ENCODE measurements at regions of chr1 and their contacts with region 1.

Region 1: DNA sequence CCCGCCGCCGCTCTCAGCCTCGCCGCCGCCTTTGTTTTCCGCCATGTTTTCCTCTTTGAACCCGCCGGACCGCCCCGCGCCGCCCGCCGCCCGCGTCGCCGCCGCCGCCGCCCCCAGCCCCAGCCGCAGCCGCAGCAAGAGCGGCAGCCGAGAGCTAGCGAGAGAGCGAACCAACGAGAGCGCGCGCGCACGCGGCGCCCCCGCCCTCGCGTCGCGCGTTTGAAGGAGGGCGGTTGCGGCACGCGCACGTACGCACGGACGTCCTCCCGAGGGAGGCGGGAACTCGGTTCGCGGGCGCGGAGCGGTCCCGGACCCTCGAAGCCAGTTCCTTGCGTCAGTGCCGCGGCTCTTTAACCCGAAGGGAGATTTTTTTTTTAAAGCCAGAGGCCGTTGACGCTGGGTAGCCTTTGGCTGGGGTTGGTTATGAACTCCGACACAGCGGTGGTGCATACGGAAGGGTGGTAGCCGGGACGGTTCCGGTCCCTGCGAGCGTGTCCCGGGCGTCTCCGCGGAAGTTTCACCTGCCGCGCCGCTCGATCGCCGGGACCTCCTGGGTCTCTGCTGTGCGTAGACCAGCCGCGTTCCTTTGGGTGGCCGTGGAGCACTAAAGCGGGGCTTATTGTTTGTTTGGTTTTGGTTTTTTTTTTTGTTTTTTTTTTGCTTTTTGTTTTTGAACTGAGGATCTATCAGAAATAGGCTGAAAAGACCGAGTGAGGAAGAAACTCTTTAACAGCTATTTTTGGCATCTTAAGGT is at the start of gene TRIM33:
- DNase-seq: peak; percentile 98
- H3K4me3 Mint-ChIP-seq: peak within 1 kb of the TSS; percentile 96
- H3K27ac Mint-ChIP-seq: peak within 1 kb of the TSS; percentile 98
- H3K4me1 Mint-ChIP-seq: peaks cover 41% of the 10 kb centered on the region
- H3K27me3 Mint-ChIP-seq: peaks cover 2% of the 10 kb centered on the region
- total RNA-seq, gene TRIM33: 37.7 and 39.7 TPM in 2 replicates

Region 2: GRCh38 chr1:112955781-112956543 is 1555.2 kb before region 1 on chr1 and contains the start of gene SLC16A1:
- intact Hi-C with region 1: loop called (anchors 2 kb)
- DNase-seq: peak; percentile 97
- H3K4me3 Mint-ChIP-seq: peak within 1 kb of the TSS; percentile 88
- H3K27ac Mint-ChIP-seq: peak within 1 kb of the TSS; percentile 100
- H3K4me1 Mint-ChIP-seq: peaks cover 51% of the 10 kb centered on the region
- H3K27me3 Mint-ChIP-seq: no peaks in the 10 kb centered on the region
- total RNA-seq, gene SLC16A1: 79.2 and 79.7 TPM in 2 replicates

Region 3: GRCh38 chr1:114330451-114330983 is 180.7 kb before region 1 on chr1:
- intact Hi-C with region 1: no loop called
- DNase-seq: peak; percentile 70
- H3K4me3 Mint-ChIP-seq: no peak overlapping the region
- H3K27ac Mint-ChIP-seq: no peak overlapping the region
- H3K4me1 Mint-ChIP-seq: peaks cover 23% of the 10 kb centered on the region
- H3K27me3 Mint-ChIP-seq: peaks cover 12% of the 10 kb centered on the region

Region 4: DNA sequence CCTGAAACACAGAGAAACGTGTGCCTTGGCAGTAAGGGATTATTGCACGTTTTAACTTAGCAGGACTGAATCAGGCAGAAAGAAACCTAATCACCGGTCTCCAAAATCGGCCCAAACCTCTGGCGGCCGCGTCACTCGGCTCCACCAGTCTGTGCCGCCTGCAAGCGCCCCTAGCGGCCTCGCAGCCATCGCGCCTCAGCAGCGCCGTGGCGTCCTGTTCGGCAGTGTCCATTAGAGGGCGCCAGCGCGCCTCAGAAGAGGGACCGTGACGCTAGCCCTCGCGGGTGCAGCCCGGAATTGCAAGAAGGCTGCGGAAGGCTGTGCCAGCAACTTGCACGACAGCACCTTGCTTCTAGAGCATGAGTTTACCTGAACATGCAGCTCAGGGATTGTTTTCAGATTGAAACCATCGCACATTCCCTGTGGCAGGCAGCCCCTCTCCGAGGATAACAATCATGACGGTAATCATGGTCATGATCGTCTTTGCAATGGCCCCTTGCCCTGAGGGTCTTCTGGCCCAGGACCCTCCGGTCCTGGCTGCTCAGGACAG is 164.7 kb before region 1 on chr1:
- intact Hi-C with region 1: loop called (anchors 2 kb)
- DNase-seq: peak; percentile 100
- H3K4me3 Mint-ChIP-seq: peak overlapping the region; percentile 86
- H3K27ac Mint-ChIP-seq: peak overlapping the region; percentile 84
- H3K4me1 Mint-ChIP-seq: peaks cover 14% of the 10 kb centered on the region
- H3K27me3 Mint-ChIP-seq: no peaks in the 10 kb centered on the region

Region 5: GRCh38 chr1:114549137-114549536 is 37.9 kb after region 1 on chr1:
- intact Hi-C with region 1: no loop called
- DNase-seq: no peak
- H3K4me3 Mint-ChIP-seq: no peak overlapping the region
- H3K27ac Mint-ChIP-seq: no peak overlapping the region
- H3K4me1 Mint-ChIP-seq: no peaks in the 10 kb centered on the region
- H3K27me3 Mint-ChIP-seq: peaks cover 2% of the 10 kb centered on the region

Region 6: DNA sequence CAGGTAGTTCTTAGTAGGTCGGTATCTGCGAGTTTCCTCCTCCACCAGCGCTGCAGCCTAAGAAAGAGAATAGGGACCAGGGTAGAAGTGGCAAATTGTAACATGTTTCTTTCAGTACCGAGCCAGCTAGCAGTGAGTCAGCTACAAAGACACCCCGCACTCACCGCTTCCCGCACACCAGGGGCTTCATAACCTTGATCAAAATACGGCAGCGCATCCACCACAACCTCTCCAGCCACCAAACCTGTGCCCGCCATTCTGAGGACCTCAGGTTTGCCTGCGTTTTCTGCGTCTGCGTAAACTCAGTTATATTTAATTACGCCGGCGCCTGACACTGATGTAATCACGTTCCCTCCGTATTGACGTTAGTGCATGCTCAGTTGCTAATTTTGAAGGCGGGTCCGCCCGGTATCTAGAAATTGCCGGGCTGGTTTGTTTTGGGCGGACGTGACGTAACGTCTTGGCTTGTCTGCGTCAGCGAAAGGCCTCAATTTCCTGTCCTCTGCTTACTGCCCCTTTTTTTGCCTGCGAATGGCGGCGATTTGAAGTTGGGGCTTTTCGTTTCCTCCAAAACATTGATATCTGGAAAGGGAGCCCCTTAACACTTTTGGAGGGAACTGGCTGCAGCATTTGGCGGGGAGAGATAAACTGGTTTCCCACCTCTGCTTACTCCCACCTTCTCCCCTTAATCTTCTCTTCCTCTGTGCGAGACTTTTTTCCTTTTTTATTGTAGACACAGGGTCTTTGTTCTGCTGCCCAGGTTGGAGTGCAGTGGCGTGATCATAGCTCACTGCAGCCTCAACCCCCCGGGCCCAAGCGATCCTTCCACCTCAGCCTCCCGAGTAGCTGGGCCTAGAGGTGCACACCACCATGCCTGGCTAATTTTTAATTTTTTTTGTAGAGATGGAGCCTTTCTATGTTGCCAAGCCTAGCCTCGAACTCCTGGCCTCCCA is 70.4 kb after region 1 on chr1 and contains the start of gene BCAS2:
- intact Hi-C with region 1: loop called (anchors 1 kb)
- DNase-seq: peak; percentile 98
- H3K4me3 Mint-ChIP-seq: peak within 1 kb of the TSS; percentile 95
- H3K27ac Mint-ChIP-seq: peak within 1 kb of the TSS; percentile 93
- H3K4me1 Mint-ChIP-seq: peaks cover 19% of the 10 kb centered on the region
- H3K27me3 Mint-ChIP-seq: peaks cover 9% of the 10 kb centered on the region
- total RNA-seq, gene BCAS2: 63.5 and 64.0 TPM in 2 replicates

Region 7: DNA sequence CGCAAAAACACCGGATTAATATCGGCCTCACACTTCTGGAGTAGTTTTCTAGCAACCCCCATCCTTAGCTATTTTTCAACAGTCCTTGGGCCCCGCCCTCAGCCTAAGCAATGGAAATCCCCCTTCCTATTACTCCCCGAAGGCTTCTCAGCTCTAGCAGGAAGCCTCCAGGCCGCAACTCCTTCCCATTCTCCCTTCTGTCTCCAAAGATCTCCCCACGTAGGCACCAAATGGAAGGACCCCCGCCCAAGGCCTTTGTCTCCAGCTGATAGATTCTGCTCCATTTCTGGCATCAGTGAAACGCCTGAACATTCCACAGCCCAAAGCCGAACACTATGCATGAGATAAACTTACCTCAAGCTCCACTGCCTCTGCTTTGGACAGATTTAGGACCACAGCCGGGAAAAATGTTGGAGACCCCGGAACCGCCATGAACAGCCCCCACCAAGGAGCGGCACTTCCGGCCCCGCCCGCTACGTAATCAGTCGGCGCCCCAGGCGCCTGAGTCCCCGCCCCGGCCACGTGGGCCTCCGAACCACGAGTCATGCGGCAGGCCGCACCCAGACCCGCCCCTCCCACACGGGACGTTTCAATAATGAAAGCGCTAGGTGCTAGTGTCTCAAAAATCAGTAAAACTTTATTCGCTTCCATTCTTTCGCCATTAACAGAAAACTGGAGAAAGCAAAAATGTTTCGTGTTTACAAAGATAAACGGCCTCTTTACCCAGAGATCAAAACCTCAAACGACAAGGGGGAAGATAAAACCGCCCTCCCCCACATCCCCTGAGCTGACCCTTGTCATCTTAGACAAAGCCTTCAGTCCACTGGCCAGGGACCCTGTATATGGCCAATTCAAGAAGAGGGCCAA is 205.3 kb after region 1 on chr1 and contains the start of gene NRAS:
- intact Hi-C with region 1: loop called (anchors 2 kb)
- DNase-seq: peak; percentile 99
- H3K4me3 Mint-ChIP-seq: peak within 1 kb of the TSS; percentile 95
- H3K27ac Mint-ChIP-seq: peak within 1 kb of the TSS; percentile 93
- H3K4me1 Mint-ChIP-seq: peaks cover 20% of the 10 kb centered on the region
- H3K27me3 Mint-ChIP-seq: no peaks in the 10 kb centered on the region
- total RNA-seq, gene NRAS: 60.7 and 61.4 TPM in 2 replicates